ENCODE measurements at regions of chr6 and their contacts with region 1.

Region 1: GRCh38 chr6:41936073-41936837 is 5.4 kb downstream of the CCND3 start:
- DNase-seq: peak; percentile 89
- H3K4me3 Mint-ChIP-seq: peak overlapping the region; percentile 86
- H3K27ac Mint-ChIP-seq: peak overlapping the region; percentile 83
- H3K4me1 Mint-ChIP-seq: peaks cover 67% of the 10 kb centered on the region
- H3K27me3 Mint-ChIP-seq: no peaks in the 10 kb centered on the region

Region 2: DNA sequence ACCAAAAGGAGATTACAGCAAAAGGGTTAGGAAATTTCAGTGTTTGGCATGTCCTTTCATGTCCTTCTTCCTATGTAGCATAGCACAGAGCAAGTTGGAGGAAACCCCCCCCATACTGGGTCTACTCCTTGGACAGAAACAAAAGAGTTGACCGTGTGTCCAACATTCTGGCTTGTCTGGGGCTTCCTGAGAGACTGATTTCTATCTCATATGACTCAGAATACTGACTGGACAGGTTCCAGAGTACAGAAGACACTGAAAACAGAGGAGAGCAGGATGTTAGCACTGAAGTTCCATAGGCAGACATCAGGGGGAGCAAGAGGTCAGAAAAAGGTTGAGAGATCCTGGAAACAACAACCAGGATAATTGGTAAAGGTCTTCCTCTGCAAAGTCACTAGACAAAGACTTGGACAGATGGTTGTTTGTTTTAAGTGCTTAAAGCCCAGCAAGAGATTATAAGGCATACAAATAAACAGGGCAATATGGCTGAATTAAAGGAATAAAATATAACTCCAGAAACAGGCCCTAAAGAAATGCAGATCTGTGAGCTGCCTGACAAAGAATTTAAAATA is 89.5 kb before region 1 on chr6:
- intact Hi-C with region 1: loop called (anchors 2 kb)
- DNase-seq: peak; percentile 21
- H3K4me3 Mint-ChIP-seq: no peak overlapping the region
- H3K27ac Mint-ChIP-seq: no peak overlapping the region
- H3K4me1 Mint-ChIP-seq: peaks cover 19% of the 10 kb centered on the region
- H3K27me3 Mint-ChIP-seq: no peaks in the 10 kb centered on the region

Region 3: GRCh38 chr6:41901882-41902519 is 34.3 kb before region 1 on chr6:
- intact Hi-C with region 1: loop called (anchors 1 kb)
- DNase-seq: peak; percentile 34
- H3K4me3 Mint-ChIP-seq: no peak overlapping the region
- H3K27ac Mint-ChIP-seq: no peak overlapping the region
- H3K4me1 Mint-ChIP-seq: peaks cover 13% of the 10 kb centered on the region
- H3K27me3 Mint-ChIP-seq: no peaks in the 10 kb centered on the region

Region 4: GRCh38 chr6:41914869-41915530 is 21.3 kb before region 1 on chr6:
- intact Hi-C with region 1: no loop called
- DNase-seq: no peak
- H3K4me3 Mint-ChIP-seq: no peak overlapping the region
- H3K27ac Mint-ChIP-seq: no peak overlapping the region
- H3K4me1 Mint-ChIP-seq: peaks cover 19% of the 10 kb centered on the region
- H3K27me3 Mint-ChIP-seq: no peaks in the 10 kb centered on the region

Region 5: GRCh38 chr6:41958022-41958856 is 22.0 kb after region 1 on chr6:
- intact Hi-C with region 1: loop called (anchors 1 kb)
- DNase-seq: no peak
- H3K4me3 Mint-ChIP-seq: peak overlapping the region; percentile 5
- H3K27ac Mint-ChIP-seq: peak overlapping the region; percentile 85
- H3K4me1 Mint-ChIP-seq: peaks cover 33% of the 10 kb centered on the region
- H3K27me3 Mint-ChIP-seq: no peaks in the 10 kb centered on the region

Region 6: GRCh38 chr6:41984623-41985022 is 48.4 kb after region 1 on chr6:
- intact Hi-C with region 1: no loop called
- DNase-seq: no peak
- H3K4me3 Mint-ChIP-seq: no peak overlapping the region
- H3K27ac Mint-ChIP-seq: no peak overlapping the region
- H3K4me1 Mint-ChIP-seq: peaks cover 11% of the 10 kb centered on the region
- H3K27me3 Mint-ChIP-seq: no peaks in the 10 kb centered on the region

Region 7: GRCh38 chr6:42043787-42044475 is 107.7 kb after region 1 on chr6:
- intact Hi-C with region 1: loop called (anchors 1 kb)
- DNase-seq: peak; percentile 85
- H3K4me3 Mint-ChIP-seq: peak overlapping the region; percentile 66
- H3K27ac Mint-ChIP-seq: peak overlapping the region; percentile 66
- H3K4me1 Mint-ChIP-seq: peaks cover 75% of the 10 kb centered on the region
- H3K27me3 Mint-ChIP-seq: no peaks in the 10 kb centered on the region